Naive thymus-derived CD4-positive, alpha-beta T cell (primary cell): ENCODE measurements at regions of chr3 and their contacts with region 1.

Region 1: DNA sequence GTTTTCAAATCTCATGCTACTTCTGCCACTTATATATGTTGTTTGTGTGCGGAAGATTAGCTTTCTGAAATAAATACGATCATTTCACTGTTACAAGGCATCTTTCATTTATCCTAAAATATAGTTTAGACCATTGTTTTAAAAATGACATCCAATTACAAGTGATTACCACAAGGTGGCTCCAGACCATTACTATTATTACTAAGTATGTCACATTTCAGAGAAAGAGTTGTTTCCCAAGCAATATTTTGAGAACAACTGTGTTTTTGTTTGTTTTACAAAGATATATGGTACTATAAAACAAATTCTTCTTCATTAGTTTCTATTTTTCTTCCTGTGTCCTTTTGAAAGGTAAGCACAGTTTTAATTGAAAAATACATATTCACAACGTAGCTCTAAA is 136.0 kb upstream of the RAP2B start:
- DNase-seq: peak in 5 of 9 donors; percentile 19 to 30 (median 22)
- ATAC-seq: no peak
- H3K4me3 ChIP-seq: no peak overlapping the region
- H3K4me3 Mint-ChIP-seq: no peak overlapping the region
- H3K27ac ChIP-seq: no peak overlapping the region
- H3K27ac Mint-ChIP-seq: no peak overlapping the region
- H3K4me1 ChIP-seq: no peaks in the 10 kb centered on the region
- H3K4me1 Mint-ChIP-seq: peaks cover 0 to 1% (median 0%) of the 10 kb centered on the region in 7 donors
- H3K27me3 ChIP-seq: peaks cover 0 to 2% of the 10 kb centered on the region in 2 donors
- H3K27me3 Mint-ChIP-seq: peaks cover 7 to 21% (median 14%) of the 10 kb centered on the region in 5 donors

Region 2: GRCh38 chr3:153052096-153052460 is 26.1 kb after region 1 on chr3:
- CTCF ChIA-PET with region 1: no interaction called
- POLR2A ChIA-PET with region 1: no interaction called
- intact Hi-C with region 1: no loop called
- DNase-seq: no peak
- ATAC-seq: no peak
- H3K4me3 ChIP-seq: no peak overlapping the region
- H3K4me3 Mint-ChIP-seq: no peak overlapping the region
- H3K27ac ChIP-seq: no peak overlapping the region
- H3K27ac Mint-ChIP-seq: no peak overlapping the region
- H3K4me1 ChIP-seq: no peaks in the 10 kb centered on the region
- H3K4me1 Mint-ChIP-seq: peaks cover 0 to 2% (median 0%) of the 10 kb centered on the region in 7 donors
- H3K27me3 ChIP-seq: no peaks in the 10 kb centered on the region
- H3K27me3 Mint-ChIP-seq: no peaks in the 10 kb centered on the region

Region 3: DNA sequence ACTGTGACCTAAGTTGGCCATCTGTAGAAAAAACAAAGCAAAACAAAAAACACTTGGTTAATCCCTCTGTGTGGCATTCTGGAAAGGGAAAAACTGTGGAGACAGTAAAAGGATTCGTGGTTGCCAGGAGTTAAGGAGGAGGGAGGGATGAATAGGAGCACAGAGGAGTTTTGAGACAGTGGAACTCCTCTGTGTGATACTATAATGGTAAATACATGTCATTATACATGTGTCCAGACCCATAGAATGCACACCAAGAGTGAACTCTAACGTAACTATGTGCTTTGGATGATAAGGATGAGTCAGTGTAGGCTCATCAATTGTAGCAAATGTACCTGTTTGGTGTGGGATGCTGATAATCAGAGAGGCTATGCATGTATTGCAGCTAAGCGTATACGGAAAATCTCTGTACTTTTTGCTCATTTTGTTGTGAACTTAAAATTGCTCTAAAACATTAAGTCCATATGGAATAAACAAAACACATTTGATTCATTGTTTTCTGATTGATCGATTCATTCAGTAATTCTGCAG is 169.4 kb after region 1 on chr3:
- CTCF ChIA-PET with region 1: no interaction called
- POLR2A ChIA-PET with region 1: no interaction called
- intact Hi-C with region 1: no loop called
- DNase-seq: no peak
- ATAC-seq: no peak
- H3K4me3 ChIP-seq: no peak overlapping the region
- H3K4me3 Mint-ChIP-seq: no peak overlapping the region
- H3K27ac ChIP-seq: no peak overlapping the region
- H3K27ac Mint-ChIP-seq: no peak overlapping the region
- H3K4me1 ChIP-seq: no peaks in the 10 kb centered on the region
- H3K4me1 Mint-ChIP-seq: peaks cover 0 to 5% (median 0%) of the 10 kb centered on the region in 7 donors
- H3K27me3 ChIP-seq: no peaks in the 10 kb centered on the region
- H3K27me3 Mint-ChIP-seq: no peaks in the 10 kb centered on the region

Region 4: DNA sequence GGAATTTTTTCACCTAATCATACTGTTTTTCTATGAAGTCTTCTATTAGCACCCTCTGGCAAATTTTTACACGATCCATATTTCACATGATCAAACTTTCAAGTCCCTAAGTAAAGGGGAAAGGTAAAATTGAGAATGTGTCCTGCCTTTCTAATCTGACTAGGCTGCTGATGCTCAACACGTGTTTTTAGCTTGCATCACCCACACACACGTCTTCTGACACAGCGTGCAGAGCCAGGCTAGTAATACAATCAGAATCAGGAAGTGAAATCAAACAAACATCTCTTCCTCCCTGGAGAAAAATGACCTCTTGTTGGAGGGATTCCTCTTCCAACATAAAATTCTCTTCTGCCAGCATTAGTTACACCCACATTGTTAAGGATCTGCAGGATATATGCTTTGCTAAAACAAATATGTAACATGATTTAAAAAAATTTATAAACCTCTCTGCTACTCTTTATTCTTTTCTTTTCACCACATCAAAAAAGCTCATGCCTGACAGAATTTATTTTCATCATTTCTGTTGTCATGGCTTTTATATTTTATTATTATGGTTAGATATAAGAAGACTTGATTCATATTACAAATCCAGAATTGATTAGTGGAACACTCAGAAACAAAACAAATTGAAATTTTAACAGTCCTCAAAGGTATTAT is 258.4 kb after region 1 on chr3:
- CTCF ChIA-PET with region 1: no interaction called
- POLR2A ChIA-PET with region 1: no interaction called
- intact Hi-C with region 1: loop called in 1 of 2 experiments (anchors 5 kb)
- DNase-seq: peak in 7 of 9 donors; percentile 7 to 53 (median 40)
- ATAC-seq: peak; percentile 85
- H3K4me3 ChIP-seq: no peak overlapping the region
- H3K4me3 Mint-ChIP-seq: peak overlapping the region; percentile 2 to 78 (median 54)
- H3K27ac ChIP-seq: peak overlapping the region; percentile 1
- H3K27ac Mint-ChIP-seq: peak overlapping the region; percentile 60 to 92 (median 74)
- H3K4me1 ChIP-seq: peaks cover 13 to 29% of the 10 kb centered on the region in 2 donors
- H3K4me1 Mint-ChIP-seq: peaks cover 25 to 48% (median 43%) of the 10 kb centered on the region in 7 donors
- H3K27me3 ChIP-seq: no peaks in the 10 kb centered on the region
- H3K27me3 Mint-ChIP-seq: no peaks in the 10 kb centered on the region

Region 5: DNA sequence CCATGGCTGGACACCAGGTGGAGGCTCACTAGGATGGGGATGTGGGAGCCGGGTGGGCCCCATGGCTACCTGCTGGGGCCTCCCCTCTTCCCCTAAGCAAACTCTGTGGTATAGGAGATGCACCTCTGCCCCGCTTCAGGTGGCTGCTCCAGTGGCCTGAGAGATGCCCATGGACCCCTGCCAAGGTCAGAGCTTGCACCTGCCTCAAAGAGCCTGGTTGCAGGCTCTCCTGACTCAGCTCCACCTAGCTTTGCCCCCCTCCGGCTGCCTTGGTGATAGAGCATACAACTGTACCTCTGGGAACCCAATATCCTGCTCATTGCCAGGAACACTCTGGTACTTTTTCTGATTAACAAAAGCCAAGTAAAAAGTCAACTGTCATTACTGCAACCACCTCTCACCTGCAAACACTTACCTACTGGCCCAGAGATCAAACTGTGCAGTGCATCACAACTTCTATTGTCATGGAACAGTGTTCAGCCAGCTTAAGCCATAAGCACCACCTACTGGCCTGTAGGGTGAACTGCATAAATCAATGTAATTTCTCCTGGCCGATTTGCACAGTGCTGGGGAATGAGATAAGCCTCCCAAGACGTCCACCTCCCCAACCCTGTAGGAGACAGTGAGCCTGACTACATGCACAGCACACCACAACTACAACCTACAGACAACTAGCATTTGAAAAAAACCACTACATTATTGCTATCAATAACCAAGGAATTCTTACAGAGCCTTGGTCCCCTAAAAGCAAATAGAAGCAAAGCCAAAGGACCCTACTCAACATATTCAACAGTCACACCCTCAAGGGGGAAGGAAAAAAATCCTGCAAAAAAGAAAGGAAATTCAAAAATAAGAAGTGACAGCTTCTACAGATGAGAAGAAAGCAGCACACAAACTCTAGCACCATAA is 742.8 kb after region 1 on chr3:
- CTCF ChIA-PET with region 1: interaction called, 6 read pairs
- POLR2A ChIA-PET with region 1: no interaction called
- intact Hi-C with region 1: loop called (anchors 1 kb)
- DNase-seq: peak; percentile 12 to 67 (median 59)
- ATAC-seq: peak; percentile 96
- H3K4me3 ChIP-seq: no peak overlapping the region
- H3K4me3 Mint-ChIP-seq: no peak overlapping the region
- H3K27ac ChIP-seq: no peak overlapping the region
- H3K27ac Mint-ChIP-seq: peak overlapping the region in 1 of 9 donors; percentile 74
- H3K4me1 ChIP-seq: no peaks in the 10 kb centered on the region
- H3K4me1 Mint-ChIP-seq: peaks cover 0 to 12% (median 0%) of the 10 kb centered on the region in 7 donors
- H3K27me3 ChIP-seq: no peaks in the 10 kb centered on the region
- H3K27me3 Mint-ChIP-seq: peaks cover 6 to 28% (median 11%) of the 10 kb centered on the region in 5 donors

Region 6: DNA sequence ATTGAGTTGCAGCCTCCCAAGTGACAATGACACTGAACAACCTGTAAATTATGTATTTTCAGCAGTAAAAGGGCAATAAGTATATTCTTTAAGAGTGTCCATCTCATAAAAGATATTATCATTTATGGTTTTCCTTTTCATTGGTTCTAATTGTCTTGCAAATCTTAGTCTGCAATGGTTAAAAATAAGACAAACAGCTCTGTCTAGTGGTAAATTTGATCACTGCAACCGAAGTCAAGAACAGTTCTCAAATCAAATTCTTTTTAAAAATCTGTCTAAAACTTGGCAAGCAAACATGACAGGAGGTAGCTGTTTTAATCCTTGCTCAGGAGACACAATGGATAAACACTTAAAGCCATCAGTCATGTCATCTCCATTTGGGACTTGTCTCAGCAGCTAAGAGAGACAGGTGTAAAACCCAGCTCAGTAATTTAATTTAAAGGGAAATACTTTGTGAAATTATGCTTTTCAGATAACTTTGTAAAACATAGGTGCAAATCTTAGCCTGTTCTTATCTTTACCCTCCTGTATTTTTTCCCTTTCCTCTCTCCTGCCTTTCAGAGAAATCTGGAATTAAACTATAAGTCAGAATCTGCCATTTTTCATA is 944.8 kb after region 1 on chr3:
- CTCF ChIA-PET with region 1: no interaction called
- POLR2A ChIA-PET with region 1: no interaction called
- intact Hi-C with region 1: loop called in 1 of 2 experiments (anchors 5 kb)
- DNase-seq: no peak
- ATAC-seq: no peak
- H3K4me3 ChIP-seq: no peak overlapping the region
- H3K4me3 Mint-ChIP-seq: no peak overlapping the region
- H3K27ac ChIP-seq: no peak overlapping the region
- H3K27ac Mint-ChIP-seq: no peak overlapping the region
- H3K4me1 ChIP-seq: no peaks in the 10 kb centered on the region
- H3K4me1 Mint-ChIP-seq: no peaks in the 10 kb centered on the region
- H3K27me3 ChIP-seq: peaks cover 0 to 3% of the 10 kb centered on the region in 2 donors
- H3K27me3 Mint-ChIP-seq: peaks cover 3 to 32% (median 23%) of the 10 kb centered on the region in 5 donors

Region 7: GRCh38 chr3:154252759-154253638 is 1227.0 kb after region 1 on chr3:
- CTCF ChIA-PET with region 1: interaction called, 8 read pairs
- POLR2A ChIA-PET with region 1: no interaction called
- intact Hi-C with region 1: loop called (anchors 1 to 2 kb)
- DNase-seq: peak; percentile 16 to 67 (median 49)
- ATAC-seq: peak; percentile 84
- H3K4me3 ChIP-seq: no peak overlapping the region
- H3K4me3 Mint-ChIP-seq: no peak overlapping the region
- H3K27ac ChIP-seq: no peak overlapping the region
- H3K27ac Mint-ChIP-seq: peak overlapping the region in 1 of 9 donors; percentile 48
- H3K4me1 ChIP-seq: no peaks in the 10 kb centered on the region
- H3K4me1 Mint-ChIP-seq: peaks cover 0 to 5% (median 0%) of the 10 kb centered on the region in 7 donors
- H3K27me3 ChIP-seq: no peaks in the 10 kb centered on the region
- H3K27me3 Mint-ChIP-seq: no peaks in the 10 kb centered on the region